ENCODE measurements at regions of chr2 and their contacts with region 1.

Region 1: GRCh38 chr2:237674731-237675276 is 47.4 kb downstream of the LRRFIP1 start:
- DNase-seq: peak; percentile 85
- H3K4me3 Mint-ChIP-seq: peak overlapping the region; percentile 77
- H3K27ac Mint-ChIP-seq: peak overlapping the region; percentile 80
- H3K4me1 Mint-ChIP-seq: peaks cover 45% of the 10 kb centered on the region
- H3K27me3 Mint-ChIP-seq: no peaks in the 10 kb centered on the region

Region 2: DNA sequence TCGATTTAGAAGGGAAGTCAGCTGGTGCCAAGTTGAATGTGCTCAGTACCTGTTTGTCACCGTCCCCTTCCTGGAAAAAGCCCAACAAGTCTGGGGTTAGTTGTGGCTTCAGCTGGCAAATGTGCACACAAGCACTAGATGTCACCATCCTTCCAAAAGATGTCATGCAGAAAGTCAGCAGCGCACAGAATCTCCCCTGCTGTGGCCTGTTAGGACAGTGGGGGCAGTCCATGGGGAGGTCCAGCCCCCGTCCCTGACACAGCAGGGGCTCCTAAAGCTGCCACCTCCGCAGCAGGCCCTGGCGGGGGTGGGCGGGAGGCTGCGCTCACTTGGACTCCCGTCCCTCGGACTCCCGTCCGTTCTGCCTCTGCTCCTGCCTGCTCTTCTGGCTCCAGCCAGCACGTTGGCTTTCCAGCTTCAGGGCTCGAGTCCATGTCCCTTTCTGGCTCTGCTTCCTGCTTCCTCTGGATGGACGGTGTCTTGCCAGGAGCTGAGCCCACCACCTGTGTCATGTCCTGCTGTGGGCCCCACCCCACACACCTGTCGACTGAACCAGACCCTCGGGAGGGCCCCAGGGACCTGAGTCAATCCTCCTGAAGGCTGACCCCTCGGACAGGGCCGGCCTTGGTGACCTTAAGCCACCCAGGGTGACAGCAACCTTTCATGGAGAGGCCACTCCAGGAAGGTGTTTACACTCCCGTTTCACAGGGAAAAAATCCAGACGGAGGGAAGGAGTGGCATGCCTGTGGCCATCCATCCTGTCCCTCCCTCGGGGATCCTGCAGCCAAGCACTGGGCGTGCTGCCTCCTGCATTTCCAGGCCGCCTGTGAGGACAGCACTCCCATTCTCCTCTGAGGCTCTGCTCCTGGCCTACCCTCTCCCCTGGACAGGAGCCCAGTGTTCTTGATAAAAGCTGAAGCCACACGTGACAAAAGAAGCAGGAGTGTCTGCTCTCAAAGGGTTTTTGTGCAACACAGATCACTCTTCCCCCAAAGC is 92.8 kb before region 1 on chr2:
- CTCF ChIA-PET with region 1: interaction called, 11 read pairs
- intact Hi-C with region 1: loop called (anchors 1 kb)
- DNase-seq: peak; percentile 87
- H3K4me3 Mint-ChIP-seq: no peak overlapping the region
- H3K27ac Mint-ChIP-seq: peak overlapping the region; percentile 56
- H3K4me1 Mint-ChIP-seq: peaks cover 4% of the 10 kb centered on the region
- H3K27me3 Mint-ChIP-seq: no peaks in the 10 kb centered on the region

Region 3: DNA sequence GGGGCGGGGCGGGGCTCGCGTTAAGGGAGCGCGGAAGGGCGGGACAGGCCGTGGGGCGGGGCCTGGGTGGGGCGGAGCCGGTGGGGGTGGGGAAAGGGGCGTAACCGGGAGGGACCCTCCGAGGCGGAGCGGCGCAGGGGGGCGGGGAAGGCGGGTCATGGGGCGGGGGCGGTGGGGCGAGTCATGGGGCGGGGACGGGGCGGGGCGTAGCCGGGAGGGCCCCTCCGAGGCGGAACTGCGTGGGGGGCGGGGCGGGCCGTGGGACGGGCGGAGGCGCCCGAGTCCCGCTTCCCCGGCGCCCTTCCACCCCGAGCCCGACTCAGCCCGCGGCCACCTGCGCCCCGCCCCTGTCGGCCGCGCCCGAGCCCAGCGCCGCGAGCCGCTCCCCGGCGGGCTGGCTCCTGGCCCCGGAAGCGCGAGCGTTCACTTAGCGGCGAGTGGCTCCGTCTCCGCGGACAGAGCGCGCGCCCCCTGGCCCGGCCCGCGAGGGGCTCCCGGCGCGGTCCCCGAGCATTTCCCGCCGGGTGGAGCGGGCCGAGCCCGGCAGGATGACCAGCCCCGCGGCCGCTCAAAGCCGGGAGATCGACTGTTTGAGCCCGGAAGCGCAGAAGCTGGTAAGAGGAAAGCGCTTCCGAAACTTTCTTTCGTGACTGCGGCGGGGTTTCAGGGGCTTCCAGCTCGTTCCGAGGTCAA is 17.2 kb after region 1 on chr2:
- CTCF ChIA-PET with region 1: interaction called, 142 read pairs
- intact Hi-C with region 1: loop called (anchors 1 kb)
- DNase-seq: peak; percentile 94
- H3K4me3 Mint-ChIP-seq: peak overlapping the region; percentile 87
- H3K27ac Mint-ChIP-seq: peak overlapping the region; percentile 95
- H3K4me1 Mint-ChIP-seq: peaks cover 66% of the 10 kb centered on the region
- H3K27me3 Mint-ChIP-seq: no peaks in the 10 kb centered on the region

Region 4: DNA sequence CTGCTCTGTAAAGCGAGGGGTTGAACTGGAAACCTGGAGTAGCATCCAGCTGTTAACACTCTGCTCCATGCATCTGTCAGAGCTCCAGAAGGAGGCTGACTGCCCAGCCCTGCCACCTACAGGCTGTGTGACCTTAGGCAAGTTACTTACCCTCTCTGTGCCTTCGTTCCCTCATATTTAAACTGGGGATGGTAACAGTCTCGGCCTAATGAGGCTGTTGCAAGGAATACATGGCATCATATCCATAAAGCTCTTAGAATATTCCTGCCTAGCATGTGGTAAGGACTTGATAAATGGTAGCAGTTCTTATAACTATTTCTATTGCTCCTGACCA is 33.2 kb after region 1 on chr2:
- CTCF ChIA-PET with region 1: interaction called, 15 read pairs
- intact Hi-C with region 1: no loop called
- DNase-seq: no peak
- H3K4me3 Mint-ChIP-seq: no peak overlapping the region
- H3K27ac Mint-ChIP-seq: no peak overlapping the region
- H3K4me1 Mint-ChIP-seq: peaks cover 55% of the 10 kb centered on the region
- H3K27me3 Mint-ChIP-seq: no peaks in the 10 kb centered on the region

Region 5: DNA sequence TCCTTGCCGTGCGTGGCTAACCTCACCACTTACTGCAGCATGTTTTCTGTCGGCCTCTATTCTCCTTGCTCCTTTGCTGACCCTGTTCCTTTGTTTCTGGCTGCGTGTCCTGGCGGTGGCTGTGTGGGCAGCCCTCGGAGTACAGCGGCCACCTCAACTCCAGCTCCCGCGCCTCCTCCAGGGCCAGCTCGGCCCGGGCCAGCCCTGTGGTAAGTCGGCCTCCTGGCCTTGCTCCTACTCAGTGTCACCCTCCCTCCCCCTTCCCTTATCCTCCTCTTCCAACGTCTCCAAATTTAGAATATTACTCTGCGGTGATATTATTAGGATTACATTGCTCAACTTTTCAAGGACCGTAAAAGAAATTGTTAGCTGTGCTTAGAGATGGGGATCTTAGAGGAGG is 64.3 kb after region 1 on chr2:
- CTCF ChIA-PET with region 1: interaction called, 146 read pairs
- intact Hi-C with region 1: no loop called
- DNase-seq: no peak
- H3K4me3 Mint-ChIP-seq: no peak overlapping the region
- H3K27ac Mint-ChIP-seq: peak overlapping the region; percentile 36
- H3K4me1 Mint-ChIP-seq: peaks cover 35% of the 10 kb centered on the region
- H3K27me3 Mint-ChIP-seq: no peaks in the 10 kb centered on the region

Region 6: DNA sequence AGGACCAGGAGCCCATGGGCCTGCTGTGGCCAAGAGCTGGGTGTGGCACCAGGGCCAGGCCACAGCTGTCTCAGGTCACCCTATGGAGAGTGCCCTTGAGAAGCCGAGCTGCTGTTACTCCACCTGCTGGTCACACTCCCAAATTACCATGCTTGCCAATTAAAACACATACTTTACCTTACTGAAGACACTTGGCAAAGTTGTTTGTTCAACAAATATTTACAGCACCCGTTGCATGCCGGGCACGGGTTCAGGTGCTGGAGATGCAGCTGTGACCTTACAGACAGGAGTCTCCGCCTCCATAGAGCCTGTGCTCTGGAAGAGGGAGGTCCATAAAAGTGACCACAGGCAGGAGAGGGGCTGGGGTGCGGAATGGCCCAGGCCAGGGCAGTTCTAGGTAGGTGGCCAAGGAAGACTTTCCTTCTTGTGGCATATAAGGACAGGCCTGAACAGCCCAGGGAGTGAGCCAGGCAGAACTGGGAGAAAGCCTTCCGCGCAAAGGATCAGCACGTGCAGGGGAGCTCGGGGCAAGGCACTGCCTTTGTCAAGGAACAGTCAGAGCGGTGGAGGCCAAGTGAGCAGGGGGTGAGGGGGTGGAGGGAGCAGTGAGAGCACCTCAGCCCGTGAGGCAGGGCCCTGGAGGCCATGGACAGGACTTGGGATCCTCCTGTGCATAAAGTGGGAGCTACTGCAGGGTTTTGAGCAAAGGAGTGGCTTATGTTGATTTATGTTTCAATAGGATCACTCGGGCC is 100.2 kb after region 1 on chr2:
- CTCF ChIA-PET with region 1: interaction called, 24 read pairs
- intact Hi-C with region 1: loop called (anchors 1 kb)
- DNase-seq: peak; percentile 70
- H3K4me3 Mint-ChIP-seq: no peak overlapping the region
- H3K27ac Mint-ChIP-seq: no peak overlapping the region
- H3K4me1 Mint-ChIP-seq: no peaks in the 10 kb centered on the region
- H3K27me3 Mint-ChIP-seq: no peaks in the 10 kb centered on the region

Region 7: DNA sequence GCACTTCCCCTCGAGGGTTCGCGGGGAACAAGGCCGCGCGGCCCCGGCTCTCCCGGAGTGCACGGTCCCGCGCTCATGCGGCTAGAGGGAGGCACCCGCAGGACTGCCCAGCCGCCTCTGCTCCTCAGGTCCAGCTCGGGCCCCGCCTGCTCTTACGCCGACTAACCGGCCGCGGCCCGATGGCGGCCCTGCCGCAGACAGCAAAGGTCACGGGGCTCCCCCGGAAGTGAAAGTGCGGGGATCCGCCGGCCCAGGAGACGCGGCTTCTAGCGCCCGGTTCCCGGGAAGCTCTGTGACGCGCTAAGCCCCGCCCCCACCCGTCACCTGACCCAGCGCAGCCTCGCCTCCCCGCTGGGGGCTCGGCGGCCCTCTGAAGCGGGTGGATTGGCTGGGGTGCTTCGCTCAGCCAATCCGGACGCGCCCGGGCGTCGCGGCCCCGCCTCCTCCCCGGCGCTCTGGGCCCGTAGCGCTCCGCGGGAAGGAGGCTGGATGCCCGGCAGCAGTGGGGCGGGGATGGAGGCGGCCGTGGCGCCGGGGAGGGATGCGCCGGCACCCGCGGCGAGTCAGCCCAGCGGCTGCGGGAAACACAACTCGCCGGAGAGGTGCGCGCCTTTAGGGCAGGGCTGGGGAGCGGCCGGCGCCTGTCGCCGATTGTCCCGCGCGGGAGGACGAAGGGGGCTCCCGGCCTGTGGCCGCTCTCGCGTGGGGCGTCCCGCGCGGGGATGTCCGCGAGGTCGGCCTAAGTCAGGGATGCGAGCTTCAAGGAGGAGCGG is 385.9 kb after region 1 on chr2 and contains the start of gene SCLY:
- CTCF ChIA-PET with region 1: no interaction called
- intact Hi-C with region 1: loop called (anchors 2 kb)
- DNase-seq: peak; percentile 99
- H3K4me3 Mint-ChIP-seq: peak within 1 kb of the TSS; percentile 90
- H3K27ac Mint-ChIP-seq: peak within 1 kb of the TSS; percentile 87
- H3K4me1 Mint-ChIP-seq: peaks cover 48% of the 10 kb centered on the region
- H3K27me3 Mint-ChIP-seq: peaks cover 3% of the 10 kb centered on the region
- total RNA-seq, gene SCLY: 46.4 to 46.7 TPM